ENCODE measurements at regions of chr17 and their contacts with region 1.

Region 1: GRCh38 chr17:3549579-3550162 is 7.9 kb downstream of the TRPV3 start:
- DNase-seq: no peak
- H3K4me3 ChIP-seq: no peak overlapping the region
- H3K27ac ChIP-seq: no peak overlapping the region
- H3K4me1 ChIP-seq: no peaks in the 10 kb centered on the region
- H3K27me3 ChIP-seq: no peaks in the 10 kb centered on the region
- CTCF ChIP-seq: no peak

Region 2: DNA sequence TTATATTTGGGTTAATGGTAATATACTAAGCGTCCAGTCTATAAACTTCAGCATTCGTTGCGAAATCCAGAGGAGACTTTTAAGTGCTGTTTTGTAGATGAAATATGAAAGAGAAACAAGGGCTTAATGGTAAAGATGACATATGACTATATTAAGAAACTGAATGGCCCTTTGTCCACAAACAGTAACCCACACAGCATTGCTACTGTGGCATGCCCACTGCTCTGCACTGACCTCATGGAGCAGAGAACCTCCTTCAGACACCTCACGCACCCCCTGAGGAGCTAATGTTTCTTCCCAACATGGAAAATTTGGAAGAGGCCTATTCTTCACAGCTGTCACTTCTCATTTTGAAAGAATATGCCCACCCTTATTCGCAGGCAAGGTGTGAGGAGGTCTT is 47.2 kb before region 1 on chr17:
- CTCF ChIA-PET with region 1: no interaction called
- POLR2A ChIA-PET with region 1: no interaction called
- intact Hi-C with region 1: no loop called
- DNase-seq: no peak
- H3K4me3 ChIP-seq: no peak overlapping the region
- H3K27ac ChIP-seq: no peak overlapping the region
- H3K4me1 ChIP-seq: no peaks in the 10 kb centered on the region
- H3K27me3 ChIP-seq: no peaks in the 10 kb centered on the region
- CTCF ChIP-seq: no peak

Region 3: DNA sequence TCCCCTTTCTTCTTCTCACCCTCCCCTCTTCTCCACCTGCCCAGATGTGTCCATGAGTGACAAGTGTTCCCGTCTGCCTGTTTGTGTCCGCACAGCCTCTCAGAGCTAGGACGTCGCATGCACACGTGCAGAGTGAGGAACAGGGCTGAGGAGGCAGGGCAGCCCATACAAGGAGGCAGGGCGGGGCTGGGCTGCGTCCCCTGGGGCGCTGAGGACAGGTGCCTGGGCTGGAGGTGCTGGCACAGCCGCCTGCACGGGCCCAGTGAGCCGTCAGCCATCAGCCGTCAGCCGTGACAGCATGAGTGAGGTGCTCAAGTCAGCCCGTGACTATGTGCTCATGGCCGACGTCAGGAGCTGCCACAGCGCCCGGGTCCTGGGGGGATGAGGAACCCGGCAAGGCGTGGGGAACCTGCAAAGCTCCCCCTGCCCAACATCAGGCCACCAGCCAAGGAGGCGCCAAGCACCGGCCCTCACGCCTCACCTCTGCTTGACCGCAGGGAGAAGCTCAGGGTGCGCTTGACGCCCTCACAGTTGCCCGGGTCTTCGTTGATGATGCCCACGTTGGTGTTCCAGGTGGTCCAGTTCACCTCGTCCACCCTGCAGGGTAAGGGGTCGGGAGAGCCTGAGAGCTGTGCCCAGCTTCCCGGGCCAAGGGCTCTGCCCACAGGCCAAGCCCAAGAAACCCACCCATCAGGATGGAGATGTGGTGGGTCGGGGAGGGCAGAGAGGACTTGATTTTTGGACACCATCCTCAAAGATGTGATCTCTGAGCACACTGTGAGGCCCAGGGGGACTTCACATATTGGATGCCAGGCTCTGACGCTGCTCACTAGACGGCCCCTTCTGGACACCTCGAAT is 21.6 kb after region 1 on chr17:
- CTCF ChIA-PET with region 1: interaction called, 11 read pairs
- POLR2A ChIA-PET with region 1: no interaction called
- intact Hi-C with region 1: no loop called
- DNase-seq: no peak
- H3K4me3 ChIP-seq: no peak overlapping the region
- H3K27ac ChIP-seq: no peak overlapping the region
- H3K4me1 ChIP-seq: no peaks in the 10 kb centered on the region
- H3K27me3 ChIP-seq: no peaks in the 10 kb centered on the region
- CTCF ChIP-seq: no peak